ENCODE measurements at regions of chr12 and their contacts with region 1.

Region 1: DNA sequence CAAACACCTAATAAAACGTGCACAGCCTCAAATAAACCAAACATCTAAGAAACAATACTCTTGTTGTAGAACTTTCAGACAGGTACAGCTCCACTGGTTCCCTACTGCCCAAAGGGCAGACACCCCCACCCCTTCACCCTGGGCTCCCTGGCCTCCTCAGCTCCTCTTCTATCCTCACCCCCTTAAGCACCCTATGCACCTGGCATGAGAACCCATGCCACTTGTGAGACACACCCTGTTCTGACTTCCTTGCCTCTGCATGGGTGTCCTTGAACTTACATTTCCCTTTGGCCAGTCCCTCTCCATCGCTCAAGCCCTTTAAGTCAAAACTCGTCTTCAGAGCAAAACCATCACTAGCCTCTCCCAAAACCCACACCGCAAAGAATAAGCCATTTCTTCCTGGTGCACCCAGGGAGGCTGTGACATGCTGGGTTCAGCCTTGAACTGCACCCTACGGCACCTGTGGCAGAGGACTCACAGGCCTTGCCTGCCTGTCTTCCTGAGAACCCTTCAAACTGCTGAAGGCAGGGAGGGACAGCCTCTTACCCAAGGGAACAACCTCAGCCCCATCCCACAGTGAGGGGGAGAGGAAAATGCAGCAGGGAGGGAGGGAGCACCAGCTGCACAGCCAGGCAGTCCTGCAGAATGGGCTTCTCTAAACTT is 12.6 kb upstream of the ACTR6 start:
- DNase-seq: no peak
- ATAC-seq: no peak

Region 2: DNA sequence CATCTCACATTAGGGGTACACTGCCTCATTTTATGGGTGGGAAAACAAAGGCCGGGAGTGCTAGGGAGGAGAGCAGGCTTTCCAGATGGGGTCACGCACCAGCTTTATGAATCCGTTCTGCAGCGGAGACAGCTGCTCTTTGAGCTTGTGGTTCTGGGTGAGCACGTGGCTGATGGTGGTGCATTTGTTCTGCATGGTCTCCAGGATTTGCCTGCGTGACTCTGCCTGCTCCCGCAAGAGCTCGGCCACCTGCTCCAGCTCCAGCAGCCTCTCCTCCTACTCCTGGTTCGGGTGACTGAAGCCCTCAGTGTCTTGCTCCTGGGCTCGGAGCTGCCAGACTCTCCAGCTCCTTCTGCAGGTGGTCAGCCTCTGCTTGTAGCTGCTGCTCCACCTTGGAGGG is 21.8 kb before region 1 on chr12:
- intact Hi-C with region 1: loop called (anchors 1 kb)
- DNase-seq: no peak
- ATAC-seq: no peak